Spleen (tissue), 13 donors: ENCODE measurements at regions of chr19 and their contacts with region 1.

Region 1: GRCh38 chr19:55632463-55632834 is 8.1 kb upstream of the ZNF784 start:
- DNase-seq: no peak
- H3K4me3 ChIP-seq: no peak overlapping the region
- H3K27ac ChIP-seq: peak overlapping the region in 4 of 8 donors; percentile 21 to 56 (median 33)
- H3K4me1 ChIP-seq: peaks cover 21 to 52% (median 43%) of the 10 kb centered on the region in 6 donors
- H3K27me3 ChIP-seq: no peaks in the 10 kb centered on the region
- CTCF ChIP-seq: peak; percentile 71 to 95 (median 87)
- POLR2A ChIP-seq: no peak

Region 2: GRCh38 chr19:55516878-55517620 is 115.4 kb before region 1 on chr19:
- intact Hi-C with region 1: loop called (anchors 2 kb)
- DNase-seq: peak; percentile 96
- H3K4me3 ChIP-seq: peak overlapping the region in 7 of 8 donors; percentile 25 to 63 (median 37)
- H3K27ac ChIP-seq: peak overlapping the region; percentile 71 to 88 (median 82)
- H3K4me1 ChIP-seq: peaks cover 0 to 13% (median 11%) of the 10 kb centered on the region in 6 donors
- H3K27me3 ChIP-seq: peaks cover 0 to 27% (median 0%) of the 10 kb centered on the region in 7 donors
- CTCF ChIP-seq: peak; percentile 67 to 98 (median 87)
- POLR2A ChIP-seq: no peak

Region 3: GRCh38 chr19:55688422-55689246 is 56.2 kb after region 1 on chr19:
- intact Hi-C with region 1: no loop called
- DNase-seq: peak; percentile 65
- H3K4me3 ChIP-seq: no peak overlapping the region
- H3K27ac ChIP-seq: no peak overlapping the region
- H3K4me1 ChIP-seq: peaks cover 0 to 63% (median 26%) of the 10 kb centered on the region in 6 donors
- H3K27me3 ChIP-seq: no peaks in the 10 kb centered on the region
- CTCF ChIP-seq: no peak
- POLR2A ChIP-seq: no peak